ENCODE measurements at regions of chr14 and their contacts with region 1.

Region 1: DNA sequence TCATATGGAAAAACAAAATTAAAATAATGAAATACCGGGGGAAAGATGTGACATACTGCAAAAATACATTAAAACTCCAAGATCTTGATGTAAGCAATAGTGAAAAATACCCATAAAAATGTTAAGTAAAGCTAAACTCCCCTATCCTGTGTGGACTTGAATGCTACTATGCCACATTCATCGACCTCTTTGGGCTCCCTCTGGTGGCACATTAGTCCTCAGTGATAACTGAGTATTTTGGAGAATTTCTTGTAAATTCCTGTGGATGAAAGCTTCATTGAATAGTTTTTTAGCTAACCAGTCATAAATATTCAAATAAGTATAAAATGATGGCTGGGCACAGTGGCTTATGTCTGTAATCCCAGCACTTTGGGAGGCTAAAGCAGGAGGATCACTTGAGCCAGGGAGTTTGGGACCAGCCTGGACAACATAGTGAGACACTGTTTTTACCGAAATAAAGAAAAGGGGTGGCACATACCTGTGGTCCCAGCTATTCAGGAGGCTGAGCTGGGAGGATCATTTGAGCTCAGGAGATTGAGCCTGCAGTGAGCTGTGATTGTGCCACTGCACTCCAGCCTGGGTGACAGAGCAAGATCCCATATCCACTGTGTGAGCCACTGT is 42.4 kb upstream of the SGPP1 start:
- DNase-seq: peak in 1 of 2 donors; percentile 42
- ATAC-seq: peak in 6 of 8 donors; percentile 44 to 74 (median 66)
- H3K4me3 ChIP-seq: no peak overlapping the region
- H3K27ac ChIP-seq: no peak overlapping the region
- H3K4me1 ChIP-seq: peaks cover 0 to 3% (median 0%) of the 10 kb centered on the region in 9 donors
- H3K27me3 ChIP-seq: no peaks in the 10 kb centered on the region
- CTCF ChIP-seq: peak; percentile 6 to 70 (median 65)

Region 2: DNA sequence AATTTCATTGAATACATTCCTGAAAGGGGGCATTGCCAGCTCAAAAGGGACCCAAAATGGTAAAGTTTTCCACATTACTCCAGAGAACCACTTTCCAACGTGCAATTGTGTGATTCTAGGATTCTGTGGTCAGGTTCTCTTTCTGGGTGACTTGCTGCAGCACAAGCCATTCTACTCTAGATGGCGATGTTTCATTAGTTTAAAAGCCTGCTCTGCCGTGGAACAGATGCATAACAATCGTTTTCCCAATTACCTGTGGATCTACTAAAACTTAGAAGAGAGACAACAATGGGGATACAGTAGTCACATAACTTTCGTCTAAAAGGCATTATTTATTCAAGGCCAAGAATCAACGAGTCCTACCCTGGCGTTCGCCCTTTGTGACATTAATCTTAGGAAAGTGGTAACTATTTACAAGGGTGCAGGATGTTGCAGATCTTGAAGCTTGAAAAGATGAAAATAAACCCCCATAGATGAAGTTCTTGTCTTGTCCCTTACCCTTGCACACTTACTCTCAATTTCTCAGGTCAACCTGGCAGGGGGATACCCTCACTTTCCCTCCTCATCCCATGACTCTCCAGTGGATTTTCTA is 1607.2 kb before region 1 on chr14:
- intact Hi-C with region 1: loop called in 1 of 10 experiments (anchors 10 kb)
- DNase-seq: no peak
- ATAC-seq: peak in 3 of 8 donors; percentile 42 to 49 (median 44)
- H3K4me3 ChIP-seq: no peak overlapping the region
- H3K27ac ChIP-seq: no peak overlapping the region
- H3K4me1 ChIP-seq: no peaks in the 10 kb centered on the region
- H3K27me3 ChIP-seq: peaks cover 0 to 47% (median 13%) of the 10 kb centered on the region in 7 donors
- CTCF ChIP-seq: peak; percentile 28 to 75 (median 62)

Region 3: DNA sequence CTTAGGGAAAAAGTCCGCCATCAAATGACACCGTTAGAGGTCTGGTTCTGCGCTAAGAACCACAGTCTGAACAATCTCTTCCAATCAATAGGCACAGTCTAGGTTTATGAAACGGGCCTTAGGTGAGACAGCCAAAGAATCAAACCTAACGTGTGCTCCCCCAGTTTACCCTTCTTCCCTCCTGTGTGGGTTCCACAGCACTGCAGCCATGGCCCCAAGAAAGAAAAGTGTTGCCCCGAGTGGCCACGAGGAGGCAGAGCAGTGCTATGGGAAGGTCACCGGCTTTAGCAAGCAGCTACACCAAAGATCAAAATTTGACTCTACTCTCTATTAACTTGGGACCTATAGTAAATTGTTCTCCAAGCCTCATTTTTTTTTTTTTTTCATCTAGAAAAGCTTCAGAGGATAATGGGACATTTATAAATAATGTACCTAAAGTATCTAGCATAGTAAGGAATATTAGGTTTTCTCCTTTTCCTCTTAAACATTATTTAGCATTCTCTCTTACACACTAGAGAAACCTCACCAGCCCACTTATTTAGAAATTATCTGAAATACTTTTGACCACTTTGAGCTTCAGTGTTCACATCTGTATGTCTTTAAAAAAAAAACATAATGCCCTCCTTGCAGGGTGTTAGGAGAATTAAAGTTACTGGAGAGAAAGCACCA is 381.4 kb before region 1 on chr14:
- intact Hi-C with region 1: loop called in 6 of 10 experiments (anchors 5 to 10 kb)
- DNase-seq: peak; percentile 46 to 51
- ATAC-seq: peak in 7 of 8 donors; percentile 73 to 89 (median 86)
- H3K4me3 ChIP-seq: no peak overlapping the region
- H3K27ac ChIP-seq: no peak overlapping the region
- H3K4me1 ChIP-seq: no peaks in the 10 kb centered on the region
- H3K27me3 ChIP-seq: no peaks in the 10 kb centered on the region
- CTCF ChIP-seq: peak; percentile 58 to 87 (median 81)

Region 4: GRCh38 chr14:63632932-63633514 is 137.3 kb before region 1 on chr14:
- intact Hi-C with region 1: loop called in 1 of 10 experiments (anchors 10 kb)
- DNase-seq: no peak
- ATAC-seq: no peak
- H3K4me3 ChIP-seq: no peak overlapping the region
- H3K27ac ChIP-seq: no peak overlapping the region
- H3K4me1 ChIP-seq: no peaks in the 10 kb centered on the region
- H3K27me3 ChIP-seq: no peaks in the 10 kb centered on the region
- CTCF ChIP-seq: peak in 7 of 9 donors; percentile 30 to 57 (median 45)

Region 5: GRCh38 chr14:63727774-63728728 is 42.2 kb before region 1 on chr14 and contains the start of gene SGPP1:
- intact Hi-C with region 1: loop called in 2 of 10 experiments (anchors 2 to 5 kb)
- DNase-seq: peak; percentile 77 to 84
- ATAC-seq: peak; percentile 93 to 97 (median 95)
- H3K4me3 ChIP-seq: peak within 1 kb of the TSS; percentile 57 to 100 (median 94)
- H3K27ac ChIP-seq: peak within 1 kb of the TSS; percentile 73 to 96 (median 91)
- H3K4me1 ChIP-seq: peaks cover 0 to 28% (median 21%) of the 10 kb centered on the region in 9 donors
- H3K27me3 ChIP-seq: no peaks in the 10 kb centered on the region
- CTCF ChIP-seq: peak; percentile 11 to 67 (median 48)
- total RNA-seq, gene SGPP1: 4.0 to 9.0 (median 4.7) TPM

Region 6: DNA sequence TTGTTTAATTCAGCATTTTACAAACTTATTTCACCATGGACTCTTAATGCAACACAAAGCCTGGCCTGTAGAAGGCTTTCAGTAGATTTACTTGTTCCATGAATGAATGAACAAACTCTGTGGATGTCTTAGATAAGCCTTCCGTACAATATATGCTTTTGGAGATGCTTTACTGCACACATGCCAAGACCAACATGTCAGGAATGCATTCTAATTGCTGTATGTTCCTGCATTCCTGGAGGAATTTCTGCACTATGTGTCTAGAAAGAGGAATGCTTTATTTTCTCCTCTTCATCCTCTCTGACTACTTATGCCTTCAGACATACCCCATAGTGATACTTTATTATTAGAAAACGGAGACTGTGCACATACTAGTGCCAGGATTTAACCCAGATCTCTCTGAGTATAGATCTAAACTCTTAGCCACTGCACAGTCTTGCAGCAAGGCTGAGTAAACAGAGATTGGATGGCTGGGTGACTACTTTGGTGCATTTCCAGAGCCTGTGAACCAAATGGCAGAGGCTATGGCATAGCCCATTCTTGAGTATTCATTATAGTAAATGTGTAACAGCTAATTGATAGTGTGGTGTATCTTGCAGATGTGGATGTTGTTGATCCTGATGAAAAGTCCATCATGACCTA is 190.8 kb after region 1 on chr14:
- intact Hi-C with region 1: no loop called
- DNase-seq: no peak
- ATAC-seq: no peak
- H3K4me3 ChIP-seq: no peak overlapping the region
- H3K27ac ChIP-seq: no peak overlapping the region
- H3K4me1 ChIP-seq: peaks cover 0 to 12% (median 0%) of the 10 kb centered on the region in 9 donors
- H3K27me3 ChIP-seq: no peaks in the 10 kb centered on the region
- CTCF ChIP-seq: no peak